Heart left ventricle (tissue), 16 donors: ENCODE measurements at regions of chr5 and their contacts with region 1.

Region 1: DNA sequence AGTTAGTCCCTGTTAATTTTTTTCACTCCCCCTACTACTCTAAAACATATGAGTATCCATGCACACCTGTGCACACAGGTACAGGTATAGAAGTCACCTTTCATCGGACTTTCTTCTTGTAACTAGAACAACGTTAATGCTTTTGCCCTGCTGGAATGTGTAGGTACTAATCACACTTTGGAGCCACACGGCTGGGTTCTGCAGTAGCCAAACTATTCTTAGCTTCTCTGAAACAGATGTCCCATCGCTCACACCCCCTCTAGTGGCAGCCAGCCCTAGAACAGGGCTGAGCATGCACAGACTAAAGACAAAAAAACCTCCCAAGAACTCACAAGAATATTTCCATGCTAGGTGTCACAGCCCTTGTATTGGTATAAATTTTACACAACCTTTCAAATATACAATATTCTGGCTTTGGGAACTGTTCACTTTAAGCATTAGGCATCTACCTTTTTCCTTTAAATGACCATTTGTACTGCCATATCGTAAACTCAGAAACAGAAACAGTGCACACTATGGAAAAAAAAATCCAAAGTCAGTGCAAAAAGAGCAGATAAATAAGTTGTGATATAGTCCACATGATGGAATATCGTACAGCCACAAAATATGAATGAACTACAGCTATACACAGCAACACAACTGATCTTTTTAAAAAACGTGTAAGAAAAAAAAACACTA is 64.0 kb downstream of the RETREG1 start:
- DNase-seq: peak; percentile 74 to 87 (median 78)
- ATAC-seq: peak; percentile 87 to 93 (median 90)
- H3K4me3 ChIP-seq: no peak overlapping the region
- H3K27ac ChIP-seq: peak overlapping the region in 7 of 12 donors; percentile 2 to 73 (median 29)
- H3K4me1 ChIP-seq: peaks cover 0 to 33% (median 6%) of the 10 kb centered on the region in 12 donors
- H3K27me3 ChIP-seq: no peaks in the 10 kb centered on the region
- CTCF ChIP-seq: peak; percentile 55 to 88 (median 74)
- POLR2A ChIP-seq: no peak

Region 2: DNA sequence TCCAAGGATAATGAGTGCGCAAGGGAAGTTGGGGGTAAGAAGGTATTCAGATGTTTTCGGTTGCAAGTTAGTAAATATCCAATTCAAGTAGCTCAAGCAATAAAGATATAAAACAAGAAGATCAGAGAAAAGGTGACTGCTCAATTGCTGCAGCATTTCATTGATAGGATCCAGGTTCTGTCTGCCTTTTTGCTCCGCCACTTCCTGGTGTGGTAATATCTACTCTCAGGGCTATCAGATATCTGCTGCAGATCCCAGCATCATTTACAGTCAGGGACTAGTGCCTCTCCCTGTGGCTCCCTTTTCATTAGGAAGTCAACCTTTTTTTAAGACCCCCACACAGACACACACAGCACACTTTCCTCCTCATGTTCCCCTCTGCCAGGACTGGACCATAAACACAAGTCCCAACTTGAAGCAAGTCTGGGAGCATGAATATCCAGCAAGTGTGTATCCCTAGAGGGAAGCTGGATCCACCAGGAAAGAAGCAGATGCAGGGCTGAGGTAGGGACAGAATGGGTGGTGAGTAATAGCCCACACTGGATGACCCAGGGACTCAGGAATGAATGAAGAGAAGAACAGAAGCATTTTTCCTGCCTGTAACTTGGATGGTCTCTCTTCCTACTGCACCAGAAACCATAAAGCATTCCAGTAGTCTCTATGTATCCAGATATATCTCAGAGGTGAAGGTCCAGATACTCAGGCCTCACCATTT is 140.9 kb before region 1 on chr5:
- intact Hi-C with region 1: no loop called
- DNase-seq: no peak
- ATAC-seq: no peak
- H3K4me3 ChIP-seq: no peak overlapping the region
- H3K27ac ChIP-seq: no peak overlapping the region
- H3K4me1 ChIP-seq: peaks cover 0 to 5% (median 0%) of the 10 kb centered on the region in 12 donors
- H3K27me3 ChIP-seq: no peaks in the 10 kb centered on the region
- CTCF ChIP-seq: no peak
- POLR2A ChIP-seq: no peak

Region 3: DNA sequence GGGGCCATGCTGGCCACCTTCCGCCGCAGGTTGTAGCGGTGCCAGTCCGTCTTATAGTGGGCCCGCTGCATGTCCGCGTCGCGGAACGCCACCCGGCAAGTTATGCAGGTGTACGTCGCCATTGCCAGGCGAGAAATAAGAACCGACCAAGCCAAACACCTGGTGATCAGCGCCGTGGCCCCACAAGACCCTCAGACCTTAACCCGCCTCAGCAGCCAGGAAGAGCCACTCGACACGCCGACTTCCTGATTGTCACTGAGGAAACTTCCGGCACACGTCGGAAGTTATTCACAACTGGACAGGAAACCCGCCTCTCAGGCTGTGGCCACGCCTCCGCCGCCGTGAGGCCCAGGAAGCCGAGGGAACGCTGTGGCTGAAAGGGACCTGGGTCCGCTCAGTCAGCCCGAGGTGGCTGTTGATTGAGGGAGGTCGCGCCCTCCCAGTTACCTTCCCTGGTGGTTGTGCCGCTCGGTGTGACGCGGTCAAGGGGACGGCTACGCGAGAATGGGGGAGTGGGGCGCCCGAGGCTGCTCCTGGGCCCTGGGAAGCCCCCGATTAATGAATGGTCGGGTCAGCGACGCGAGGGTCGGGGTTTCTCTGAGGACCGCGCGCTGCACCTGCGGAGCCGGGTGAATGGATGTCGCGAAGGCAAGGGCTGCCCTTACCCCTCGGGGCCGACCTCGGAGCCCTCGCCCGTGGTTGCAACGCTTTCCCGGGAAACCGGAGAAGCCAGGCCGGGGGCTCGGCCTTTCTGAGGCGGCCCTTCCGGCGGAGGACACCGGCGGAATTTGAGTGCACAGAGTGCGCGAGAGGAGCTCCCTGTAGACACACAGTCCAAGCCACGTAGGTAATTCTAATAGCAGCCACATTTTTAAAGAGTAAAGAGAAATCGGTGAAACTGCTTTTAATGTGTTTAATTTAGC is 87.0 kb before region 1 on chr5 and contains the start of gene ZNF622:
- intact Hi-C with region 1: loop called in 1 of 10 experiments (anchors 5 kb)
- DNase-seq: peak; percentile 91 to 96 (median 93)
- ATAC-seq: peak; percentile 81 to 93 (median 92)
- H3K4me3 ChIP-seq: peak within 1 kb of the TSS; percentile 81 to 97 (median 90)
- H3K27ac ChIP-seq: peak within 1 kb of the TSS; percentile 86 to 97 (median 92)
- H3K4me1 ChIP-seq: peaks cover 4 to 85% (median 61%) of the 10 kb centered on the region in 12 donors
- H3K27me3 ChIP-seq: no peaks in the 10 kb centered on the region
- CTCF ChIP-seq: no peak
- POLR2A ChIP-seq: peak; percentile 31 to 90
- total RNA-seq, gene ZNF622: 43.7 to 97.3 (median 58.4) TPM

Region 4: DNA sequence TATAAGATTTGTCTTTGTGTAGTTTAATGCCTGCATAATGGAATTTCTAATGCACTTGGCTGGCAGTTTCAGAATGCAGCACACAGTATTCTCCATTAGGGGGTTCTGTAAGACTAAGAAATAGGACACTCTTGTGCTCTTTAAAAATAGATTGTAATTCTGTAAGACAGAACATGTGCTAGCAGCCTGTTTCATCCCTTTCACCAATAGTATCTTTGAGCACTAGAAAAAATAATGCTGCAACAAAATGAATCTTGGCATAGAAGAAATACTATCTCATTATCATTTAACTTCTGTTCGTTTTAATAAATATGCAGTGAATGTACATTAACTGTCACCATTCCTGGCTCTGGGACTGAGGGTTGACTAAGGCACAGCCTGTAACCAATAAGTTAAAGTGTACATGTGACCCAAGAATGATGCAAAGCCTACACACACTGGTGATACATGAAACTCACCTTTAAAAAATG is 63.4 kb before region 1 on chr5:
- intact Hi-C with region 1: loop called (anchors 1 to 5 kb)
- DNase-seq: no peak
- ATAC-seq: peak; percentile 56 to 75 (median 72)
- H3K4me3 ChIP-seq: no peak overlapping the region
- H3K27ac ChIP-seq: peak overlapping the region in 9 of 12 donors; percentile 11 to 82 (median 78)
- H3K4me1 ChIP-seq: peaks cover 0 to 56% (median 20%) of the 10 kb centered on the region in 12 donors
- H3K27me3 ChIP-seq: no peaks in the 10 kb centered on the region
- CTCF ChIP-seq: peak; percentile 18 to 83 (median 70)
- POLR2A ChIP-seq: no peak

Region 5: DNA sequence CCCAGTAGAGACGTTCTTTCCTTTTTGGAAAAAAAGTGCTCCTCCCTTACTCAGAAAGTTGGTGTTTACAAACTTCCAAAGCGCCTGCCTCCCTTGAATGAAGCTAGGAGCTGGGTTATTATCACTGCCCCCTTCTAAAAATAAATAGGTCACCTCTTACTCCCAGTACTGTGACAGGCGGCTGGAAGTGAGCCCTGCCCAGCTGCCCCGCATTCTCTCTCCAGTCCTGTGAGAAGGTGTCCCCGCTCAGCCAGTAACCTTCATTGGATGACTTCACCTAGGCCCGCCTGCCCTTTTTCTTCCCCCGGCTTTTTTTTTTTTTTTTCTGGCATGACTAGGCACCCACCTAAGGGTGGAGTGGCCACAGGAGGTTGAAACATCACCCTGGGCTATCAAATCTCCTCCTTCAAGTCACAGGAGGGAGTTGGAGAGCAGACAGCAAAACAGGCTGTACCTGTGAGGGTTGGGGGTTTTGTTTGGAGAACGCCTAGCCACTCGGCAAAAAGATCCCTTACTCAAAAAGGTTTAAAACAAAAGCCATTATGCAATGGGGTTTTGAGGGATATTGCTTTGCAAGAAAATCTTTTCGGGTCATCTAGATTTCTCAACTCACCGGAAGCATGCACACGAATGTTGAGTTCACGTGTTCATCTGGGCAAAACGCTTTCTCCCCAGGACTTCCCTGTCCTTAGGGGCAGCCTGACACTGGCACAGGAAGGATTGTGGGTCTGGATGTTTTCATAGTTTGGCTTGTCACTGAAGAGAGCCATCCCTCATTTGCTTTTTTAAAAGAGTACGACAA is 43.9 kb before region 1 on chr5:
- intact Hi-C with region 1: loop called in 4 of 10 experiments (anchors 5 kb)
- DNase-seq: peak; percentile 77 to 89 (median 79)
- ATAC-seq: peak; percentile 92 to 94 (median 93)
- H3K4me3 ChIP-seq: peak overlapping the region; percentile 27 to 62 (median 50)
- H3K27ac ChIP-seq: peak overlapping the region; percentile 66 to 96 (median 85)
- H3K4me1 ChIP-seq: peaks cover 0 to 24% (median 7%) of the 10 kb centered on the region in 12 donors
- H3K27me3 ChIP-seq: no peaks in the 10 kb centered on the region
- CTCF ChIP-seq: no peak
- POLR2A ChIP-seq: peak; percentile 69 to 77

Region 6: GRCh38 chr5:16616536-16617273 is 63.9 kb after region 1 on chr5 and contains the start of gene RETREG1:
- intact Hi-C with region 1: loop called in 2 of 10 experiments (anchors 5 to 10 kb)
- DNase-seq: peak; percentile 67 to 85 (median 79)
- ATAC-seq: peak; percentile 47 to 92 (median 88)
- H3K4me3 ChIP-seq: peak within 1 kb of the TSS; percentile 58 to 94 (median 72)
- H3K27ac ChIP-seq: peak within 1 kb of the TSS; percentile 67 to 91 (median 78)
- H3K4me1 ChIP-seq: peaks cover 0 to 26% (median 6%) of the 10 kb centered on the region in 12 donors
- H3K27me3 ChIP-seq: peaks cover 0 to 7% (median 0%) of the 10 kb centered on the region in 9 donors
- CTCF ChIP-seq: peak in 1 of 12 donors; percentile 3
- POLR2A ChIP-seq: no peak
- total RNA-seq, gene RETREG1: 80.3 to 219 (median 173) TPM